ENCODE measurements at regions of chr19 and their contacts with region 1.

Region 1: DNA sequence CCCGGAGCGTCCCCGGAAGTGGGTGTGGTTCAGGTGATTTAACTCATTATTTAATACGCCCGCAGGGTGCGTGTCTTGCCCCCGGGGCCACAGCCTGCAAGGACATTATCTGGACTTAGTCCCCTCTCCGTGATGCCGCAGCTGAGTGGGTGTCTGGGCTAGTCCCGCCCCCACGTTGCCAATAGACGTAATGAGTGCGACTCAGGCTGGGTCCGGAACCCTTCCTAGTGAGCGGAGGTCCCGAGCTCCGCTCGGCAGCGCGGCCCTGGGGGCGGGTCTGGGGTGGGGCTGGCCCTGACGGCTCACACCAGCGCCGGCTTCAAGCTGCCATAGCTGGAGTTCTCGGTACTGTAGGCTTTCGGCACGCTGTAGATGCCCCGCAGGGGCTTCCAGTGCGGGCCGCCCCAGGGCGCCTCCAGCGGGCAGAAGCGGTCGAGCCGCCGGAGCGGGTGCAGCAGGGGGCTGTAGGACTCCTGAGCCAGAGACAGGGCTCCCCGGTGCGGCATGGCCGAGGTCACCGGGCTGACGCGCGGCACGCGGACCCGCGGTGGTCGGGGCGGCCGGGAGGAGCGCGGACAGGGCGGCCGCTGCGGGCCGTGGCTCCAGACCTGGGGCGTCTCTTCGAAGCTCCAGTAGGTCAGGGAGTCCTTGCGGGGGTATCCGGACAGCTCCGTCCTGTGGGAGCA is 918 bp upstream of the LHB start:
- DNase-seq: peak in 1 of 2 experiments; percentile 52
- ATAC-seq: peak; percentile 27 to 66
- H3K4me3 ChIP-seq: peak overlapping the region; percentile 21; the same call in 1 of the 3 replicates
- H3K27ac ChIP-seq: peak overlapping the region in 1 of 2 experiments; percentile 36; a peak in 1 of 6 replicates
- H3K4me1 ChIP-seq: peaks cover 14% of the 10 kb centered on the region; the same call in 2 of the 3 replicates
- CTCF ChIP-seq: peak; percentile 33
- EP300 ChIP-seq: no peak
- POLR2A ChIP-seq: no peak
- RAD21 ChIP-seq: no peak

Region 2: DNA sequence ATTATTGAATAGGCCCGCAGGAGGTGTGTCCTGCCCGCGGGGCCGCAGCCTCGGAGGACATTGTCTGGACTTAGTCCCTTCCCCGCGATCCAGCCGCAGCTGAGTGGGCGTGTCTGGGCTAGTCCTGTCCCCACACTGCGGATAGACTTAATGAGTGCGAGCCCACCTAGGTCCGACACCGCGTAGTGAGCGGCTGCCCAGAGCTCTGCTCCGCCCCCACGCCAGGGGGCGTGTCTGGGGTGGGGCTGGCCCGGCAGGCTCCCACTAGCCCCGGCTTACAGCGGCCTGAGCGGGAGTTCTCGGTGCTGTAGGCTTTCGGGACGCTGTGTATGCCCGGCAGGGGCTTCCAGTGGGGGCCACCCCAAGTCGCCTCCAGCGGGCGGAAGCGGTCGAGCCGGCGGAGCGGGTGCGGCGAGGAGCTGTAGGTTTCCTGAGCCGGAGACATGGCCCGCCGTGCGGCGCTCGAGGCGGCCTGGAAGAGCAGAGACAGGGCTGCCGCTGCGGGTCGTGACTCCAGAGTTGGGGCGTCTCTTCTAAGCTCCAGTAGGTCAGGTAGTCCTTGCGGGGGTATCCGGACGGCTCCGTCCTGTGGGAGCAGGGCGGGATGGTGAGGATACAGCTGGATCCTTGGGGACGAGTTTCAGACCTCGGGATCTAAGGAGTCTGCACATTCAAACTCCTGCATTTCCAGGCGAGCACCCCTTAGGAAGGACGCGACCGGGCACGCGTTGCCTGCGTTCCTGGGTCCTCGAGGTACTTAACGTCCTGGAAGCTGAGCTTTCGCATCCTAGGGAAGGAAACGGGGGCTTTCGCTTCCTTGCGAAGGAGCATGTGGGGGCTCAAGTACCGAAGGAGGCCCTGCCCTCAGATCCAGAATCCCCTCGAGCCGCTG is 38.4 kb after region 1 on chr19:
- CTCF ChIA-PET with region 1: interaction called, 10 read pairs
- POLR2A ChIA-PET with region 1: interaction called, 4 read pairs
- DNase-seq: peak; percentile 64 to 92
- ATAC-seq: peak; percentile 88 to 92
- H3K4me3 ChIP-seq: peak overlapping the region; percentile 54
- H3K27ac ChIP-seq: peak overlapping the region; percentile 64 to 87
- H3K4me1 ChIP-seq: peaks cover 11% of the 10 kb centered on the region
- CTCF ChIP-seq: peak; percentile 15; the same call in 1 of the 3 replicates
- EP300 ChIP-seq: no peak
- POLR2A ChIP-seq: peak; percentile 48; the same call in 1 of the 2 replicates
- RAD21 ChIP-seq: no peak

Region 3: DNA sequence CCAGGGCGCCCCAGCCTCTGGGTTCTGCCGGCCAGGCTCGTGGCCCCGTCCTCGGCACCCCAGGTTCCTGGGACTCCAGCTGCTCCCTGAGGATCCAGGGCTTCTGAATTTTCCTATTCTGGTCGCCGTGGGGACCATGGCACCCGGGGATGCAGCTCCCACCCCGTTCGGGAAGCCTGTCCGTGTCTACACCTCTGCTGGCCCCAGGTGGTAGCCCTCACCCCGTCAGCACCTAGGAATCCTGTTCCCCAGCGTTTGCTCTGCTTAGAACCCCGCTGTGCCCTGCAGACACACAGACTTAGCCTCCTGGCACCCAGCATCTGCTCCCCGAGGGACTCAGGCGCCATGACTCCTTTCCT is 102.5 kb after region 1 on chr19:
- CTCF ChIA-PET with region 1: no interaction called
- POLR2A ChIA-PET with region 1: no interaction called
- DNase-seq: no peak
- ATAC-seq: peak in 1 of 2 experiments; percentile 1; a peak in 1 of 6 replicates
- H3K4me3 ChIP-seq: peak overlapping the region; percentile 62
- H3K27ac ChIP-seq: peak overlapping the region in 1 of 2 experiments; percentile 95; a peak in 2 of 6 replicates
- H3K4me1 ChIP-seq: peaks cover 16% of the 10 kb centered on the region
- CTCF ChIP-seq: no peak
- EP300 ChIP-seq: no peak
- POLR2A ChIP-seq: no peak
- RAD21 ChIP-seq: no peak

Measured in A549 (cell line).